CD4-positive, alpha-beta memory T cell (primary cell): ENCODE measurements at regions of chr12 and their contacts with region 1.

Region 1: DNA sequence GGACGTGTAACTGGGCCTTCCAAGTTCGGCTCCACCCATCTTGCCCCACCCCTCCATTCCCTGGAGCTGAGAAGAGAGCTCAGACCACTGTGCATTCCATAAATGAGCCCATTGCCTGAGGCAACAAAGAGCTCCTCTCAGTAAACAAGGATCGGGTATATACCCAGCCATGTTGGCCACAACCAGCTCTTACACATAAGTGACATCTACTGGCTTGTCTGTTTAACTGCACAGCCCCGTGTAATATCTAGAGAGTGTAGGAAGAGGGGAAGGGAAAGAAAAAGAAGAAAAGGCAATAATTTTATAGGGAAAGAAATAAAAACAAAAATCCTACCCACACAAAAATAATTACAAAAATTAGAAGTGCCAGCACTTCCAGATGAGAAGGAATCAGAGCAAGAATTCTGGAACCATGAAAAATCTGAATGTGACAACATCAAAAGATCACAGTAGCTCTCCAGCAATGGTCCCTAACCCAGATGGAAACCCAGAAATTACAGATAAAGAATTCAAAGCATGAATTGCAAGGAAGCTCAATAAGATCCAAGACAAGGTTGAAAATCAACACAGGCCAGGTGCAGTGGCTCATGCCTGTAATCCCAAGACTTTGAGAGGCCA is 308.1 kb downstream of the RPAP3 start:
- DNase-seq: peak; percentile 60 to 66 (median 65)
- H3K4me3 ChIP-seq: peak overlapping the region in 1 of 2 donors; percentile 14
- H3K4me3 Mint-ChIP-seq: peak overlapping the region in 7 of 8 donors; percentile 58 to 79 (median 69)
- H3K27ac ChIP-seq: peak overlapping the region; percentile 35
- H3K27ac Mint-ChIP-seq: peak overlapping the region; percentile 75 to 94 (median 90)
- H3K4me1 ChIP-seq: peaks cover 52% of the 10 kb centered on the region
- H3K4me1 Mint-ChIP-seq: peaks cover 39 to 50% (median 44%) of the 10 kb centered on the region in 4 donors
- H3K27me3 ChIP-seq: no peaks in the 10 kb centered on the region
- H3K27me3 Mint-ChIP-seq: no peaks in the 10 kb centered on the region

Region 2: DNA sequence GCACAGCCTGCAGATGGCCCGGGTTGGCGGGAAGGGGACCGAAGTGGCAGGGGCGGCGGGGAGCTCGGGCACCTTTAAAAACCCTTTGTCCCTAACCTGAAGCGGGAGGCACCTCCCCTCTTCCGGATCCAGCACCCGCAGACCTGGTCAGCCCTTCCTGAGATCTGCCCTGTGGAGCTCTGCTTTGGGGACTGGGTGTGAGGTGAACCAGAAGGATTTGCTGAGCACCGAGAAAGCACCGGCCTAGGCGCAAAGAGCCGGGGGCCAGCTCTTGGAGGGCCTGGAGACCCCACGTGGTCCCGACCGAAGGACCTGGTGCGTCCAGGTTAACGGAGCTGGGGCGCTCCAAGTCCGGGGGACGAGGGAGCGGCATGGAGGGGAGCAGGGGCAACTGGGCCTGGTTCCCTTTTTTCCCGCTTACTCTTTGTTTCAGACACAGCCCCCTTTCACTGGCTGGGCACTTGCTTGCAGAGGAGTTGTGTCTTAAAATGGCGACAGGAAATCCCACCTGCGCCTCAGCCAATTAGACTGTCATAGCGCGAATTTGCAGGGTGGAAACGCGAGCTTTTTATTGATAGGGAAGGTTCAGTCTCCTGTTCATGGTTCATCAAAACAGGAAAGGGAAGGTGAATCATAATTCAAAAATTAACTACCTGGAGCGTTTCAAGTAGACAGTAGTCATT is 1128.1 kb before region 1 on chr12:
- CTCF ChIA-PET with region 1: no interaction called
- POLR2A ChIA-PET with region 1: no interaction called
- intact Hi-C with region 1: no loop called
- DNase-seq: peak; percentile 47 to 87 (median 51)
- H3K4me3 ChIP-seq: peak overlapping the region; percentile 91 to 96
- H3K4me3 Mint-ChIP-seq: no peak overlapping the region
- H3K27ac ChIP-seq: peak overlapping the region; percentile 95
- H3K27ac Mint-ChIP-seq: no peak overlapping the region
- H3K4me1 ChIP-seq: peaks cover 45% of the 10 kb centered on the region
- H3K4me1 Mint-ChIP-seq: peaks cover 12 to 47% (median 20%) of the 10 kb centered on the region in 4 donors
- H3K27me3 ChIP-seq: no peaks in the 10 kb centered on the region
- H3K27me3 Mint-ChIP-seq: no peaks in the 10 kb centered on the region

Region 3: DNA sequence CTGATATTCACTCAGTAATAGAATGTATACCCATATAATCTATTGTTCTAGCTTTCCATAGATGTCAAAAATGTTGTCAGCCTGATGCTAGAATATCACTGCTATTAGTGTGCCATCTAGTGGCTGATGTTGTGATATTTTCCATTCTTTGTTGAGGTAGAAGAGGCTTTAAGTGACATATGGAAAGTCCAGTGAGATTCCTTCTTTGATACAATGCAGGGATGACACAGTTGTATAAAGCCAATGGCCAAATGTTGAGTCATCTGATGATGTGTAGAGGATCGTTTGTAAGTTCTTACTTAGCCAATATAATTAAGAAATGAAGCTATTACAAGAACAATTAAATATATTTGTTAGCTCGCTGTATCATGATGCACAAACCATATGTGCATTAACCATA is 376.5 kb before region 1 on chr12:
- CTCF ChIA-PET with region 1: interaction called, 17 read pairs
- POLR2A ChIA-PET with region 1: no interaction called
- intact Hi-C with region 1: no loop called
- DNase-seq: peak in 4 of 5 donors; percentile 39 to 53 (median 50)
- H3K4me3 ChIP-seq: no peak overlapping the region
- H3K4me3 Mint-ChIP-seq: no peak overlapping the region
- H3K27ac ChIP-seq: no peak overlapping the region
- H3K27ac Mint-ChIP-seq: no peak overlapping the region
- H3K4me1 ChIP-seq: no peaks in the 10 kb centered on the region
- H3K4me1 Mint-ChIP-seq: no peaks in the 10 kb centered on the region
- H3K27me3 ChIP-seq: no peaks in the 10 kb centered on the region
- H3K27me3 Mint-ChIP-seq: peaks cover 14 to 20% of the 10 kb centered on the region in 2 donors

Region 4: DNA sequence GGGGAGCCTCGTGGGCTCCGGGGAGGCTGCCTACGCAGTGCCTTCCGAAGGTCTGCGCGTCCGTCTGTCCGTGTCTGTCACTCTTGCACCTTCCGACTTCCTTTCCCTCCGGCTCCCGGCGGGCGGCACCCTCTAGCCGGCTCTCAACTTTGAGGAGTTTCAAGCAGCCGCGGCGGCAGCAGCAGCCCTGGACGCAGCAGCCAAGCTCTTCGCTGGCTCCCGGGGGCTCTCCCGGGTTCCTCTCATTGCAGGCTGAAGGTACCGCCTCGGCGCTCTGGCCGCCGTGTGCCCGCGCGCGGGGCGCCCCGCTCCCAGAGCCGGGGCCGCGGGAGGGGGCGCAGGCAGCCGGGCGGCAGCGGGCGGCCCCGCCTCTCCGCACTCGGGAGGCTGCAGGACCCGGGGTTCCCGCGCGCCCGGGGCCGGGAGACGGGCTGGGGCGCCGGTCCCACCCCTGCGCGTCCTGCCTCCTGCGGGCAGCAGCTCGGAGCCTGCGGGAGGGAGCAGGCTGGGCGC is 318.2 kb before region 1 on chr12 and contains the starts of genes AMIGO2 and PCED1B:
- CTCF ChIA-PET with region 1: interaction called, 71 read pairs
- POLR2A ChIA-PET with region 1: interaction called, 26 read pairs
- intact Hi-C with region 1: loop called (anchors 1 kb)
- DNase-seq: peak; percentile 43 to 63 (median 51)
- H3K4me3 ChIP-seq: peak within 1 kb of the TSS; percentile 91 to 92
- H3K4me3 Mint-ChIP-seq: peak within 1 kb of the TSS; percentile 96 to 99 (median 98)
- H3K27ac ChIP-seq: peak within 1 kb of the TSS; percentile 74
- H3K27ac Mint-ChIP-seq: peak within 1 kb of the TSS; percentile 92 to 99 (median 98)
- H3K4me1 ChIP-seq: peaks cover 66% of the 10 kb centered on the region
- H3K4me1 Mint-ChIP-seq: peaks cover 52 to 83% (median 66%) of the 10 kb centered on the region in 4 donors
- H3K27me3 ChIP-seq: no peaks in the 10 kb centered on the region
- H3K27me3 Mint-ChIP-seq: peaks cover 0 to 1% of the 10 kb centered on the region in 2 donors
- total RNA-seq, gene AMIGO2: 12.8 to 13.1 TPM
- total RNA-seq, gene PCED1B: 44.3 to 49.0 TPM

Region 5: DNA sequence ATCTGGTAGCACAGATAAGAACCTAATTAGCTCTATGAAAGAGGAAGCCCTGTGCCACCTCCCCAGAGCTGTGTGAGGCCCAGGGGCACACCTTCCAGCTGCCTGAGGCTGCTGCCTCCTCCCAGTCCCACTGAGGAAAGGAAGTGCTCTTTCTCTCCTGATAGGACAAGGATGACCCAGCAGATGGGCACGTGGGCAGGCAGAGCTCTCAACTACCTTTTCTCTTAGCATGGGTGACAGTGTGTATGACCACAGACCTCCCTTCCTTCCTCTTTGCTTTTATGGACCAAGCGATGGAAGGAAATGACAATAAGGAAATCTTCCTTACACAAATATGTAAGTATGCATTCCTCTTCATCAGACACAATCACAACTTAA is 190.4 kb before region 1 on chr12:
- CTCF ChIA-PET with region 1: interaction called, 48 read pairs
- POLR2A ChIA-PET with region 1: interaction called, 75 read pairs
- intact Hi-C with region 1: no loop called
- DNase-seq: peak; percentile 38 to 76 (median 44)
- H3K4me3 ChIP-seq: peak overlapping the region; percentile 24 to 64
- H3K4me3 Mint-ChIP-seq: peak overlapping the region; percentile 68 to 97 (median 82)
- H3K27ac ChIP-seq: peak overlapping the region; percentile 60
- H3K27ac Mint-ChIP-seq: peak overlapping the region; percentile 87 to 96 (median 94)
- H3K4me1 ChIP-seq: peaks cover 77% of the 10 kb centered on the region
- H3K4me1 Mint-ChIP-seq: peaks cover 64 to 88% (median 76%) of the 10 kb centered on the region in 4 donors
- H3K27me3 ChIP-seq: no peaks in the 10 kb centered on the region
- H3K27me3 Mint-ChIP-seq: no peaks in the 10 kb centered on the region

Region 6: GRCh38 chr12:47296828-47297227 is 100.9 kb before region 1 on chr12:
- CTCF ChIA-PET with region 1: interaction called, 10 read pairs
- POLR2A ChIA-PET with region 1: interaction called, 4 read pairs
- intact Hi-C with region 1: no loop called
- DNase-seq: no peak
- H3K4me3 ChIP-seq: no peak overlapping the region
- H3K4me3 Mint-ChIP-seq: no peak overlapping the region
- H3K27ac ChIP-seq: no peak overlapping the region
- H3K27ac Mint-ChIP-seq: peak overlapping the region in 1 of 7 donors; percentile 18
- H3K4me1 ChIP-seq: peaks cover 31% of the 10 kb centered on the region
- H3K4me1 Mint-ChIP-seq: peaks cover 20 to 47% (median 27%) of the 10 kb centered on the region in 4 donors
- H3K27me3 ChIP-seq: no peaks in the 10 kb centered on the region
- H3K27me3 Mint-ChIP-seq: no peaks in the 10 kb centered on the region

Region 7: DNA sequence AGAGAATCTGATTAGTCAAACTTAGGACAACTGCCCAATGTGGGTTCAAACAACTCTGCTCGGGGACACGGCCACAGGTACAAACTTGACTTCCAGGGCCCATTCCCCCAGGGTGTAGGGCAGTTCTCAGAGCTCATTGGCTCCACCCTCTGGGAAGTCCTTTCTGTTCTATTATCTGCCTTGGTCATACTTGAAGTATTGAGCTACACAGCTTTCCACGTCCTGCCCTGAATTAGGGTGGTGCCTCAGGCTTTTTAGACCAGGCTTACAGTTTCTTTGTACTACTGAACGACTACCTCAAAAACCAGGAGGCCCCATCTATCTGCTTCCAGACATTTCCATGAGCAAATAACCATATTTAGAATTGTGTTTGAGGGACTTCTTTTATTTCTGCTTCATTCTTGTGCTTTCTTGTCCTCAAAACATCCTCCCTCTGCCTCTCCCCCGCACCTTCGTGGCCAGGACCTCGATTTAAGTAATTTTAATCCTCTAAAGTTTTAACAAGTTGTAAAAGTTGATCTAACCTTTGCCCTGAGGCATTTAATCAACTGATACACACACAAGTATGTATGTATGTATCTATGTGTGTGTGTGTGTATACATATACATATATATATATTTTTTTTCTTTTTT is 36.3 kb before region 1 on chr12:
- CTCF ChIA-PET with region 1: interaction called, 54 read pairs
- POLR2A ChIA-PET with region 1: interaction called, 21 read pairs
- intact Hi-C with region 1: loop called (anchors 1 kb)
- DNase-seq: peak; percentile 23 to 64 (median 29)
- H3K4me3 ChIP-seq: peak overlapping the region; percentile 37 to 41
- H3K4me3 Mint-ChIP-seq: peak overlapping the region; percentile 73 to 93 (median 86)
- H3K27ac ChIP-seq: peak overlapping the region; percentile 90
- H3K27ac Mint-ChIP-seq: peak overlapping the region; percentile 94 to 99 (median 96)
- H3K4me1 ChIP-seq: peaks cover 81% of the 10 kb centered on the region
- H3K4me1 Mint-ChIP-seq: peaks cover 48 to 63% (median 55%) of the 10 kb centered on the region in 4 donors
- H3K27me3 ChIP-seq: no peaks in the 10 kb centered on the region
- H3K27me3 Mint-ChIP-seq: no peaks in the 10 kb centered on the region

Region 8: DNA sequence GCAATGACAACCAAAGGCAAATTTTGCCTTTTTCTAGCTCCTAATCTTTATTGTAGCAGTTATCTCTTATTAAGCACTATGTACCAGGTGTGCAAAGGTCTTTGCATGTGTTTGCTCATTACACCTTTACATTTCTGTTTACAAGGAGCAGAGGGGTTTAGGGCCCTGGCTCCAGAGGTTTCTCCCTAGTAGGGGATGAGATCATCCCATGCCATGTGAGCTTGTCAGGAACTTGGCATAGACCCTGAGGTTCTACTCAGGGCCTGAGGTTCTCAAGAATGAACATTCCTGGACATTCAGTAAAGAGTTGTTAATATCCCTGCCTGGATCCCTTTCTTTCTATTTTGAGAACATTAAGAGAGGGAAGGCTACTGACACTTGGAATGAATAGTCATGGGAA is 16.0 kb after region 1 on chr12:
- CTCF ChIA-PET with region 1: interaction called, 23 read pairs
- POLR2A ChIA-PET with region 1: interaction called, 4 read pairs
- intact Hi-C with region 1: no loop called
- DNase-seq: no peak
- H3K4me3 ChIP-seq: no peak overlapping the region
- H3K4me3 Mint-ChIP-seq: no peak overlapping the region
- H3K27ac ChIP-seq: no peak overlapping the region
- H3K27ac Mint-ChIP-seq: no peak overlapping the region
- H3K4me1 ChIP-seq: peaks cover 29% of the 10 kb centered on the region
- H3K4me1 Mint-ChIP-seq: peaks cover 27 to 69% (median 39%) of the 10 kb centered on the region in 4 donors
- H3K27me3 ChIP-seq: no peaks in the 10 kb centered on the region
- H3K27me3 Mint-ChIP-seq: no peaks in the 10 kb centered on the region

Region 9: GRCh38 chr12:47574252-47575021 is 176.7 kb after region 1 on chr12:
- CTCF ChIA-PET with region 1: no interaction called
- POLR2A ChIA-PET with region 1: no interaction called
- intact Hi-C with region 1: no loop called
- DNase-seq: no peak
- H3K4me3 ChIP-seq: no peak overlapping the region
- H3K4me3 Mint-ChIP-seq: no peak overlapping the region
- H3K27ac ChIP-seq: no peak overlapping the region
- H3K27ac Mint-ChIP-seq: no peak overlapping the region
- H3K4me1 ChIP-seq: no peaks in the 10 kb centered on the region
- H3K4me1 Mint-ChIP-seq: peaks cover 0 to 1% (median 0%) of the 10 kb centered on the region in 4 donors
- H3K27me3 ChIP-seq: no peaks in the 10 kb centered on the region
- H3K27me3 Mint-ChIP-seq: peaks cover 3 to 11% of the 10 kb centered on the region in 2 donors

Region 10: DNA sequence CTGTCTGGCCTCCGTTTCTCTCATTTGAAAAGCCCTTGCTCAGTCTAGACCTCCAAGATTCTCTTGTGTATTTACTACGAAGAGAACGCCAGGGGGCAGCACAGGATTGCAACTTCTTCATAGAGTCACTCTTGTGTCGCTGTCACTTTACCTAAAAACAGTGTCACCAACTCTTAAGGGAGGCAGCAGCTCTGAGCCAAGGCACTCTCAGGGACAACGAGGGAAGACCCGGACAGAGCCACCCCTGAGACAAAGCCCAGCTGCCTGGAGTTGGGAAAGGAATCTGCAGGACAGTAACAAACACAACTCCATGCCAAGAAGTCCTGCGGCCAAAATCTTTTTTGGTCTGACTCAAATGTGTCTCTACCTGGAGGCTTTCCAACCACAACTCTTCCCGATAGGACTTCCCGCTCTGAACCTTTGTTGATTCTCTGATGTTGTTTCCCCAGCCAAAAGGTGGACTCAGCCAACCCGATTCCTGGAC is 317.7 kb after region 1 on chr12:
- CTCF ChIA-PET with region 1: no interaction called
- POLR2A ChIA-PET with region 1: no interaction called
- intact Hi-C with region 1: no loop called
- DNase-seq: peak; percentile 74 to 81 (median 78)
- H3K4me3 ChIP-seq: no peak overlapping the region
- H3K4me3 Mint-ChIP-seq: no peak overlapping the region
- H3K27ac ChIP-seq: no peak overlapping the region
- H3K27ac Mint-ChIP-seq: peak overlapping the region in 5 of 7 donors; percentile 24 to 77 (median 65)
- H3K4me1 ChIP-seq: peaks cover 18% of the 10 kb centered on the region
- H3K4me1 Mint-ChIP-seq: peaks cover 11 to 24% (median 20%) of the 10 kb centered on the region in 4 donors
- H3K27me3 ChIP-seq: no peaks in the 10 kb centered on the region
- H3K27me3 Mint-ChIP-seq: no peaks in the 10 kb centered on the region